Common myeloid progenitor, CD34-positive (primary cell): ENCODE measurements at regions of chr21 and their contacts with region 1.

Region 1: DNA sequence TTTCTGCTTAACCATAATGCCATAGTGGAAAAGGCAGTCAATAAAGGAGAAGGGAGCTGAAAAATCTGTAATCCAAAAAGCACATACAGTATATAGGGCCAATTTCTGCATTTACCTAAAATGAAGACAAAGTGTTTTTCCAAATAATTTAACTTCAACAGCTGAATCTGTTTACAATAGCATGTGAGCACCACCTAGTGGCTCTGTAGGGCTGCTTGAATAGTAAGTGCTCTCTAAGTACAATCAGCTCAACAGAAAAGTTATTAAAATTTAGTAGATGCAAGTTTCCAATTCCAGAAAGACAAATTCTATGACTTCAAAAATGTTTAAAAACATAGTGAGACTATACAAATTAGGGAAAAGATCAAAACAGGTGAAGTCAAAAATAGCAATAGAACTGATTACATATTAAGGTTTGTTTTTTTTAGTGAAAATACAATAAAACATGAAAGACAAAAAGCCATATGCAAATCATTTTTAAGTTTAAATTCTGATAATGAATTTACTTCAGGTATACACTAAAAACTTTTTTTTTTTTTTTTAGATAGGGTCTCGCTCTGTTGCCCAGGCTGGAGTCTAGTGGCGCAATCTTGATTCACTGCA is 220.0 kb downstream of the SETD4 start:
- DNase-seq: peak; percentile 82 to 93 (median 90)
- H3K4me3 ChIP-seq: no peak overlapping the region
- H3K27ac ChIP-seq: no peak overlapping the region
- H3K4me1 ChIP-seq: no peaks in the 10 kb centered on the region
- H3K27me3 ChIP-seq: no peaks in the 10 kb centered on the region

Region 2: DNA sequence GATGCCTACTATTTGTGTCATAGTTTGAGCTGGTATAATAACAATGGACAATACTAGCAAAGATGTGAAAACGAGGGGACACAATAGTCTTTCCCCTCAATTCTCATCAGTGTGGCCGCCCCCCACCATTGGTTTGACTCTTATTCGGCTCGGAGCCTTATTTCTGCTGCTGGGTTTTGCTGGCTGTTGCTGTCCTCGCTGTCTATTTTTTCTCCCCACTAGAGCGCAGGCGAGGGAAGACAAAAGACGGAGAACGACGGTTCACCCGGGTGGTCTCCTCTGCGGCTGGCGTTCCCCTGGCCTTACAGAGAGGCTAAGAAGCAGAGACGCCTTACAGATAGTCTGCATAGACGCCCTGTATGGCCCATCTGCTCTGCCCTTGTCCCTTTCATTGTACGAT is 1152.2 kb before region 1 on chr21:
- CTCF ChIA-PET with region 1: interaction called, 10 read pairs
- POLR2A ChIA-PET with region 1: no interaction called
- DNase-seq: peak in 1 of 3 donors; percentile 36
- H3K4me3 ChIP-seq: no peak overlapping the region
- H3K27ac ChIP-seq: no peak overlapping the region
- H3K4me1 ChIP-seq: peaks cover 0 to 2% (median 0%) of the 10 kb centered on the region in 4 experiments
- H3K27me3 ChIP-seq: peaks cover 0 to 7% (median 2%) of the 10 kb centered on the region in 5 experiments

Region 3: DNA sequence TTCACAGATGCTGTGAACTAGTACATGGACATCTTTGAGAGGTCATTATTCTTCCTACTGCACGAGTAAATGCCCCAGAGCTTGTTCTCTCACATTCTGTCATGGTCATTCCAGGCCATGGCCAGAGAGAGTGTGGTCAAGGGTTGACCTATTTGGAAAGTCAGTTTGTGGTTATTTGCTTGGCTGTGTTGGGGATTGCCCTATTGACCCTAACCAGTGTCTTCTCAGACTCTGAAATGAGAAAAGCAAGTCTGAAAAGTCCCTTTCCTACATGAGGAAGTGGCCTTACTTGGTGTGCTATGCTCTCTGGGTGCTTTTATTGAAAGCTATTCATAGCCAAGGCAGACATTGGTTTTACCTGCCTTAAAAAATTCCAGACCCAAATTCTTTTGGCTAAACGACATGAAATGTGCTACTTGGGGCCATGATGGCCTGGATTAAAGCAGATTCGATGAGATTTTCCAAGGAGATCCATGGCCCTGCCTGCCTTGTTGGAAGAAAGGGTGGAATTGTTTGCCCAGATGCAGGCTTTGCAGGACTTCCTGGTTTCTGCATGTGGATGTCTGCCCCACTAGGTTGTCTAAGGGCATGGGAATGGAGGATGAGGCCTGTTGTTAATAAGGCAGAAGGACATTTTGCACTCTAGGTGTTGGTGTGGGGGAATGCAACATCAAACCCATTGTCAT is 1144.7 kb before region 1 on chr21:
- CTCF ChIA-PET with region 1: interaction called, 13 read pairs
- POLR2A ChIA-PET with region 1: no interaction called
- DNase-seq: no peak
- H3K4me3 ChIP-seq: no peak overlapping the region
- H3K27ac ChIP-seq: no peak overlapping the region
- H3K4me1 ChIP-seq: no peaks in the 10 kb centered on the region
- H3K27me3 ChIP-seq: peaks cover 0 to 2% (median 0%) of the 10 kb centered on the region in 5 experiments

Region 4: DNA sequence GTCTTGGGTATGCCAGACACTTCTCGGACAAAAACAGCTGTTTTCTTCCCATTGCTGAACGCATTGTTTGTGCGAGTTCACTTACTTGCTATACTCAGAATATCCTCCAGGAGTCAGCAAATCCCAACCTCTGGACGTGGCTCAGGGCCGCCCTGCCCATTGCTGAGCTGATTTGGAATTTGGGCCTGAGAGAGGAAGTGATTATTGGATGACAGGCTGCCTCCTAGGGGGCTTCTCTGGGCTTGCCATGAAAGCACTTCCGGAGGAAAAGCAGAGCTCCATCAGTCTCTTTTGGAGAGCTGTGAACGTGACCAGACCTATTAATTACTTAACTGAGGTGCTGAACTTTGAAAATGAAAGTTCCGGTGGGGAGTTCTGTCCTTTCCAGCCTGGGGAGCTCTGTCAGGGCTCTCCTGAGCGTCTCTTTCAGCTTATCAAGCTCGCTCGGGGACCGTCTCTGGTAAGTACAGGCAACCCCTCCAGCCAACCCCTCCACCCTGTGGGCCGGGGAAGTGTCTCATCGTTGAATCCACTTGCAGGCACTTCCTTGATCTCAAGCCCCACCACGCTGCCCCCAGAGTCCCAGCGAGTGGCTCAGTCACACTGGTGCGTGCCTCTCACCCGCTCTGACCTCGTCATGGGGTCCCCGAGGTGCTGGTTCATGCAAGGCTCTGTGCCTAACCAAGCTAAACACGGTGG is 1094.6 kb before region 1 on chr21:
- CTCF ChIA-PET with region 1: interaction called, 21 read pairs
- POLR2A ChIA-PET with region 1: no interaction called
- DNase-seq: peak; percentile 85 to 90 (median 90)
- H3K4me3 ChIP-seq: peak overlapping the region in 6 of 7 experiments; percentile 13 to 76 (median 48)
- H3K27ac ChIP-seq: no peak overlapping the region
- H3K4me1 ChIP-seq: peaks cover 0 to 12% (median 6%) of the 10 kb centered on the region in 4 experiments
- H3K27me3 ChIP-seq: peaks cover 0 to 3% (median 0%) of the 10 kb centered on the region in 5 experiments

Region 5: GRCh38 chr21:35738347-35738961 is 101.8 kb before region 1 on chr21:
- CTCF ChIA-PET with region 1: no interaction called
- POLR2A ChIA-PET with region 1: no interaction called
- DNase-seq: no peak
- H3K4me3 ChIP-seq: no peak overlapping the region
- H3K27ac ChIP-seq: no peak overlapping the region
- H3K4me1 ChIP-seq: no peaks in the 10 kb centered on the region
- H3K27me3 ChIP-seq: peaks cover 0 to 47% (median 6%) of the 10 kb centered on the region in 5 experiments

Region 6: GRCh38 chr21:35764586-35764985 is 75.7 kb before region 1 on chr21:
- CTCF ChIA-PET with region 1: no interaction called
- POLR2A ChIA-PET with region 1: no interaction called
- DNase-seq: no peak
- H3K4me3 ChIP-seq: no peak overlapping the region
- H3K27ac ChIP-seq: no peak overlapping the region
- H3K4me1 ChIP-seq: no peaks in the 10 kb centered on the region
- H3K27me3 ChIP-seq: peaks cover 0 to 3% (median 0%) of the 10 kb centered on the region in 5 experiments

Region 7: GRCh38 chr21:35829067-35829466 is 11.2 kb before region 1 on chr21:
- CTCF ChIA-PET with region 1: interaction called, 21 read pairs
- POLR2A ChIA-PET with region 1: no interaction called
- DNase-seq: peak in 2 of 3 donors; percentile 47 to 52
- H3K4me3 ChIP-seq: no peak overlapping the region
- H3K27ac ChIP-seq: no peak overlapping the region
- H3K4me1 ChIP-seq: peaks cover 0 to 7% (median 2%) of the 10 kb centered on the region in 4 experiments
- H3K27me3 ChIP-seq: peaks cover 0 to 2% (median 0%) of the 10 kb centered on the region in 5 experiments